Activated naive CD4-positive, alpha-beta T cell treated with anti-CD3 and anti-CD28 coated beads, Interleukin-2, amount 10 ng/mL, durations not matched to agents 7 days and 5 days (primary cell): ENCODE measurements at regions of chr1 and their contacts with region 1.

Region 1: DNA sequence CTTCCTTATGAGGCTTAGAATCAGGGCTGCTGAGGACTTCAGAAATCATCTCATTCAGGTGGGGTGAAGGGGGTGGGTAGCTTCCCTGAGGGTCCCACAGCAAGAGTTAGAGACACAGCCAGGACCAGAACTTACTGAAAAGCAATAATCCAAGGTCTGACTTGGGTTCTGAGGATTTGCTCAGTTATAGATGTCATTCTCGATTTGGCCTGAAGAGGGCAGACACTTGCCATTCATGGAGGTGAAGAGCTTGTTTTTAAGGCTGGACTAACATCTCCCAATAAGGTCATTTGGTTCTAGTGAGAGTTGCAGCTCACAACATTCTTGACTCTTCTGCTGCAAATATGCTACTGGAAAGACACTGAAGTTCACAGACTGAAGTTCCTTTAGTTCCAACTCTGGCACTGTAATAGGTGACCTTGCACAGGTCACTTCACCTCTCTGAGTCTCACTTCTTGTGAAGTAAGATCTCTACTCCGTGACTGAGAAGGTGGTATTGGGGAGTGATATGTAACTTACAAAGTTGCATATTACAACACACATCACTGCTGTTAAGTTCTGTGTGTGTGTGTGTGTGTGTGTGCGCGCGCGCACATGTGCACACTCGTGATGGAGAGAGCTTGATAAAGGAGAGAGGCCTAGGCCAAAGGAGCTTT is 69.8 kb upstream of the DIRAS3 start:
- DNase-seq: peak; percentile 32
- H3K4me3 Mint-ChIP-seq: no peak overlapping the region
- H3K27ac Mint-ChIP-seq: no peak overlapping the region
- H3K4me1 Mint-ChIP-seq: no peaks in the 10 kb centered on the region
- H3K27me3 Mint-ChIP-seq: peaks cover 3% of the 10 kb centered on the region

Region 2: GRCh38 chr1:68346188-68346808 is 226.0 kb after region 1 on chr1:
- CTCF ChIA-PET with region 1: interaction called, 28 read pairs
- DNase-seq: no peak
- H3K4me3 Mint-ChIP-seq: no peak overlapping the region
- H3K27ac Mint-ChIP-seq: no peak overlapping the region
- H3K4me1 Mint-ChIP-seq: no peaks in the 10 kb centered on the region
- H3K27me3 Mint-ChIP-seq: no peaks in the 10 kb centered on the region

Region 3: GRCh38 chr1:68442822-68443556 is 322.7 kb after region 1 on chr1:
- CTCF ChIA-PET with region 1: interaction called, 17 read pairs
- DNase-seq: peak; percentile 24
- H3K4me3 Mint-ChIP-seq: no peak overlapping the region
- H3K27ac Mint-ChIP-seq: no peak overlapping the region
- H3K4me1 Mint-ChIP-seq: no peaks in the 10 kb centered on the region
- H3K27me3 Mint-ChIP-seq: no peaks in the 10 kb centered on the region

Region 4: DNA sequence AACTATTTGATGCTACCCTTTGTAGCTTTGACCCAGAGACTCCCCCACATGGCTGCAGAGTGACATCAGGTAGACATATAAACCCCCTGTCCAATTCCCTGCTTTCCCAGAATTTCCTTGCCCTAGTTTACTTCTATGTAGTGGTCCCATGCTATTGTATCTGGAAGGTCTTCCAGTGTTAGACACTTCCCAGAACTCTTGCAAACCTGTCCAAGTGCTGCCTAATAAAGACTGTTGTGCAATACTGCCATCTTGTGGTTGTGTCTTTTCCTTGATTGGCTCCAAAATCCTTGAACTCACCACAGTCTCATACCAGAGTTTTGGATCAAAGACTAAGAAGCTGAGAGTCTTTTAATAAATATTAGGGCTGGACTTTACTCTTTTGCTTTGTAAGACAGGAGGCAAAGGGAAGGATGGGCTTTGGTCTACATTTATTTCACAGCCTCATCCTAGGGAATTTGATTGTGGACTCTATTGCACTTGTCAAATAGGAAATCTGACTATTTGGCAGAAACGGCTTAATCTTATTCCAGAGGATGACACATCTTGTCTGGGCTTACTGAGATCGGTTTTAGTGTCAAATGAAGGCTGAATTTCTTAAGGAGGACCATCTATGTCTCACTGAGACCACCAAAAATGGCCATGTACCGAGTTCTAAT is 1617.4 kb after region 1 on chr1:
- CTCF ChIA-PET with region 1: interaction called, 16 read pairs
- DNase-seq: no peak
- H3K4me3 Mint-ChIP-seq: no peak overlapping the region
- H3K27ac Mint-ChIP-seq: no peak overlapping the region
- H3K4me1 Mint-ChIP-seq: no peaks in the 10 kb centered on the region
- H3K27me3 Mint-ChIP-seq: no peaks in the 10 kb centered on the region